ENCODE measurements at regions of chr10 and their contacts with region 1.

Region 1: DNA sequence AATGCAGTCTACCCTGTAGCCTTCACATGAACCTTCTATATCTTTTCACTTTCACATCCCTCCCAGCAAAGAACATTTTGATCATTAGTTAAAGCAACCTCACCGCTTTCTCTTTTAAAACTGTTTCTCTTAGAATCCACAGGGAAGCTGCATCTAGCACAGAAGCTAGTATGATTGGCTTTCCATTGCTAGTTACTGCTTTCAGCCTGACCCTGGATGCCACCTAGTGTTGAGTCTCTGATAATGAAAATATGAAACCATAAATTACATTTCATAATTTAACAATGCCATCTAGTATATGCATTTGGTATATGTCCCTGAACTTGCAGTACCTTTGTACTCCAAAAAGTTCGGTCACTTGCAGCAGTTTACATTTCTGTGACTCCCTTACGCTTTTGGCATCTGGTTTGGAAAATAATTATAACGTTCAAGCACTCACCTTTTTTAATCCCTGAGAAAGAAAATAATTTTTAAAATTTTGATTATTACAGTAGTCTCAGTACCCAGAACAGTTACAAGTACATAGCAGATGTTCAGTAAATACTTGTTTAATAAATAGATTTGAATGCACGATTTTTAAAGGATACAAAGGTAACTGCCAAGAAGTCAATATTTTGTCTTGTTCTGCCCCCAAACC is 22.7 kb downstream of the CISD1 start:
- DNase-seq: no peak
- ATAC-seq: peak; percentile 79

Region 2: GRCh38 chr10:58177362-58177947 is 114.2 kb before region 1 on chr10:
- intact Hi-C with region 1: loop called (anchors 5 kb)
- DNase-seq: no peak
- ATAC-seq: no peak

Measured in sciatic nerve (tissue), 2 donors.